Activated naive CD4-positive, alpha-beta T cell treated with anti-CD3 and anti-CD28 coated beads for 36 hours (primary cell): ENCODE measurements at regions of chr3 and their contacts with region 1.

Region 1: DNA sequence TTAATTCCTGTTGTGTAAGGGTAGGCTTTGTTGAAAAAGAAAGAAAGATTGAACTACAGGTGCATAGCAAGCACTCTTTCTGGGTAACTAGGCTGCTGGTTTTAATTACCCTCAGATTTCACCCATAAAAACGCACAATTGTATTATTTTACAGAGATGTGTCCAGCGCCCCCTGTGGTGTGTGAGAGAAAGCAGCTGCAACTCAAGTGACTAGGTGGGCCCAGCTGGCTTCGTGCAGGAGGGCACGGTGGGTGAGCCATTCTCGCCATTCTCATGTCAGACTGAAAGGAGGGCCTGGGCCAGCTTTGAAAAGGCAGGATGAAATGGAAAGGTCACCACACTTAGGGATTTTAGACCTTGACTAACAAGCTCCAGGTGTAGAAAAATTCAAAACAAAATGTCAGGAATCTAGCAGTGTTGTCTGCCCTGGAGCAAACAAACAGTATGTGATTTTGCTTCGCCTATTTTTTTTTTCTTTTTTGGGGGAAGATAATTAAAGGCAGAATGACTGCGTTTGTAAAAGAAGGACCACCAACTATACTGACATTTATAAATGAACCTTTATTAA is 122.5 kb downstream of the LRIG1 start:
- DNase-seq: peak; percentile 47
- H3K4me3 Mint-ChIP-seq: no peak overlapping the region
- H3K27ac Mint-ChIP-seq: peak overlapping the region; percentile 59
- H3K4me1 Mint-ChIP-seq: peaks cover 11% of the 10 kb centered on the region
- H3K27me3 Mint-ChIP-seq: no peaks in the 10 kb centered on the region

Region 2: DNA sequence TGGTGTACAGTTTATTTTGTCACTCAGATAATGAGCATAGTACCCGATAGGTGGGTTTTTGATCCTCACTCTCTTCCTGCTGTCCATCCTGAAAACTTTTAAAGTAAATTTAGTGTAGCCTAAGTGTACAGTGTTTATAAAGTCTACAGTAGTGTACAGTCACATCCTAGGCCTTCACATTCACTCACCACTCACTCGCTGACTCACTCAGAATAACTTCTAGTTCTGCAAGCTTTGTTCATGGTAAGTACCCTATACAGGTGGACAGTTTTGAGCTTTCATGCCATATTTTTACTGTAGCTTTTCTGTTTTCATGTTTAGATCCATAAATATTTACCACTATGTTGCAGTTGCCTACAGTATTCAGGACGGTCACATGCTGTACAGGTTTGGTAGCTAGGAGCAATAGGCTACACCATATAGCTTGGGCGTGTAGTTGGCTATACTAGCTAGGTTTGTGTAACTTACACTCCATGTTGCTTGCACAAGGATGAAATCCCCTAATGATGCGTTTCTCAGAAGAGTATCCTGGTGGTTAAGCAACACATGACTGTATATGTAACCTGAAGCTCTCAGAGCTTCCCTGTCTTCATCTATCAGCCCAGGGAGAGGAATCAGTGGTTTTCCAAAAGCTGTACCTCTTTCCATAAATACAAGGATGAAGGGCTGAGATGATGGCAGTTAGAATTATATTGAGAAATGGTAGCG is 245.1 kb before region 1 on chr3:
- CTCF ChIA-PET with region 1: no interaction called
- intact Hi-C with region 1: no loop called
- DNase-seq: no peak
- H3K4me3 Mint-ChIP-seq: no peak overlapping the region
- H3K27ac Mint-ChIP-seq: no peak overlapping the region
- H3K4me1 Mint-ChIP-seq: no peaks in the 10 kb centered on the region
- H3K27me3 Mint-ChIP-seq: no peaks in the 10 kb centered on the region

Region 3: GRCh38 chr3:66394019-66394752 is 15.8 kb after region 1 on chr3:
- CTCF ChIA-PET with region 1: interaction called, 11 read pairs
- intact Hi-C with region 1: no loop called
- DNase-seq: peak; percentile 75
- H3K4me3 Mint-ChIP-seq: peak overlapping the region; percentile 73
- H3K27ac Mint-ChIP-seq: peak overlapping the region; percentile 82
- H3K4me1 Mint-ChIP-seq: peaks cover 48% of the 10 kb centered on the region
- H3K27me3 Mint-ChIP-seq: no peaks in the 10 kb centered on the region